ENCODE measurements at regions of chr17 and their contacts with region 1.

Region 1: GRCh38 chr17:74748529-74749365 is at the start of gene NHERF1:
- DNase-seq: peak; percentile 87 to 98
- H3K4me3 ChIP-seq: peak within 1 kb of the TSS; percentile 92 to 99
- H3K27ac ChIP-seq: peak within 1 kb of the TSS; percentile 83 to 85
- H3K4me1 ChIP-seq: peaks cover 4 to 15% of the 10 kb centered on the region in 2 donors
- H3K27me3 ChIP-seq: no peaks in the 10 kb centered on the region
- CTCF ChIP-seq: no peak
- total RNA-seq, gene NHERF1: 81.8 TPM

Region 2: GRCh38 chr17:74457146-74457819 is 291.5 kb before region 1 on chr17:
- intact Hi-C with region 1: loop called (anchors 5 kb)
- DNase-seq: peak in 1 of 2 donors; percentile 90
- H3K4me3 ChIP-seq: no peak overlapping the region
- H3K27ac ChIP-seq: no peak overlapping the region
- H3K4me1 ChIP-seq: peaks cover 19 to 22% of the 10 kb centered on the region in 2 donors
- H3K27me3 ChIP-seq: no peaks in the 10 kb centered on the region
- CTCF ChIP-seq: peak; percentile 97 to 99 (median 99)

Region 3: DNA sequence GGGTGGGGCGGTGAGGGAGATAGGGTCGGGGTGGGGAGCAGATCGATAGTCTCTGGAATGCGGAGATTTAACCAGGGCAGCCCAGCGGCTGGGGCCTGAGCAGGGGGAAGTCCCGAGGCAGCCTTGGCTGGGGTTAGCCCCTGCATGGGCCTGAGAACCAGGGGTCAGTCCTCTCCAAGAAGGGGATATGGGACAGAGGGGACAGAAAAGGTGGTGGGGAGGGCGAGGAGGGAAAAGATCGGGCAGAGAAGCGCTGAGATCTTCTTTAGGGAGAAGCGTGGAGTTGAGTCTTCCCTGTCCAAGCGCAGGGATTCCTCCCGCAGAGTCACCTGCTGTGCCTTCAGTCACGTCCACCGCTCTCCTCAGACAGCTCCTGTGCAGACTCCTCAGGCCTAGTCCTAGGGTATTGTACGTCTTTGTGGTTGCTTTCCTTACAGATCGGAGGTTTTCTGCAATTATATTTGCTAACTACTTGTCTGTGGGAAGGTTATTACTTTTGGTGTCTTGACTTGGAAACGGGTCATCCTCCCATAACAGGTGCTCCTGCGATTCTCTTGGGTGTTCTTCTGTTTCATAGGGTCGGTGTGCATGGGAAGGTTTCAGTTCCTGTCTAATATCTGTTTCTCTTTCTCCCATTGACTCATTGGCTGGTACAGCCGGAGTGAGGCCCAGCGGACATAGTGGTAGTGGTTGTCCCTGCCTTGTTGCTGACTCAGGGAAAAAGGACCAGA is 281.4 kb before region 1 on chr17:
- intact Hi-C with region 1: no loop called
- DNase-seq: no peak
- H3K4me3 ChIP-seq: peak overlapping the region; percentile 21 to 45
- H3K27ac ChIP-seq: peak overlapping the region in 1 of 2 donors; percentile 33
- H3K4me1 ChIP-seq: no peaks in the 10 kb centered on the region
- H3K27me3 ChIP-seq: no peaks in the 10 kb centered on the region
- CTCF ChIP-seq: no peak

Region 4: GRCh38 chr17:74770498-74771318 is 22.0 kb after region 1 on chr17:
- intact Hi-C with region 1: loop called (anchors 1 kb)
- DNase-seq: no peak
- H3K4me3 ChIP-seq: no peak overlapping the region
- H3K27ac ChIP-seq: no peak overlapping the region
- H3K4me1 ChIP-seq: peaks cover 10 to 31% of the 10 kb centered on the region in 2 donors
- H3K27me3 ChIP-seq: no peaks in the 10 kb centered on the region
- CTCF ChIP-seq: peak; percentile 36 to 68 (median 59)

Region 5: GRCh38 chr17:74776044-74776977 is 27.6 kb after region 1 on chr17 and contains the start of gene NAT9:
- intact Hi-C with region 1: loop called (anchors 1 kb)
- DNase-seq: peak; percentile 85 to 99
- H3K4me3 ChIP-seq: peak within 1 kb of the TSS; percentile 73 to 81
- H3K27ac ChIP-seq: peak within 1 kb of the TSS; percentile 52 to 72
- H3K4me1 ChIP-seq: peaks cover 5 to 23% of the 10 kb centered on the region in 2 donors
- H3K27me3 ChIP-seq: no peaks in the 10 kb centered on the region
- CTCF ChIP-seq: no peak
- total RNA-seq, gene NAT9: 13.3 TPM

Region 6: GRCh38 chr17:74864866-74865395 is 116.2 kb after region 1 on chr17:
- intact Hi-C with region 1: loop called (anchors 1 kb)
- DNase-seq: peak in 1 of 2 donors; percentile 87
- H3K4me3 ChIP-seq: no peak overlapping the region
- H3K27ac ChIP-seq: no peak overlapping the region
- H3K4me1 ChIP-seq: peaks cover 8 to 12% of the 10 kb centered on the region in 2 donors
- H3K27me3 ChIP-seq: peaks cover 3% of the 10 kb centered on the region
- CTCF ChIP-seq: peak; percentile 89 to 96 (median 93)

Region 7: GRCh38 chr17:74961657-74962490 is 213.1 kb after region 1 on chr17:
- intact Hi-C with region 1: loop called (anchors 2 kb)
- DNase-seq: peak in 1 of 2 donors; percentile 91
- H3K4me3 ChIP-seq: no peak overlapping the region
- H3K27ac ChIP-seq: no peak overlapping the region
- H3K4me1 ChIP-seq: no peaks in the 10 kb centered on the region
- H3K27me3 ChIP-seq: no peaks in the 10 kb centered on the region
- CTCF ChIP-seq: peak; percentile 53 to 84 (median 77)

Measured in ascending aorta (tissue), 2 donors.